ENCODE measurements at regions of chr15 and their contacts with region 1.

Region 1: GRCh38 chr15:25933456-25934158 is 70.5 kb upstream of the ATP10A start:
- DNase-seq: peak; percentile 24
- ATAC-seq: peak; percentile 91
- H3K4me3 Mint-ChIP-seq: peak overlapping the region; percentile 76
- H3K27ac Mint-ChIP-seq: no peak overlapping the region
- H3K4me1 Mint-ChIP-seq: peaks cover 15% of the 10 kb centered on the region
- H3K27me3 Mint-ChIP-seq: peaks cover 6% of the 10 kb centered on the region
- CTCF ChIP-seq: no peak

Region 2: GRCh38 chr15:24645627-24646026 is 1288.0 kb before region 1 on chr15:
- CTCF ChIA-PET with region 1: no interaction called
- POLR2A ChIA-PET with region 1: no interaction called
- intact Hi-C with region 1: no loop called
- DNase-seq: no peak
- ATAC-seq: no peak
- H3K4me3 Mint-ChIP-seq: no peak overlapping the region
- H3K27ac Mint-ChIP-seq: no peak overlapping the region
- H3K4me1 Mint-ChIP-seq: no peaks in the 10 kb centered on the region
- H3K27me3 Mint-ChIP-seq: no peaks in the 10 kb centered on the region
- CTCF ChIP-seq: no peak

Region 3: GRCh38 chr15:25508369-25509002 is 425.1 kb before region 1 on chr15:
- CTCF ChIA-PET with region 1: interaction called, 3 read pairs
- POLR2A ChIA-PET with region 1: no interaction called
- intact Hi-C with region 1: loop called (anchors 1 kb)
- DNase-seq: no peak
- ATAC-seq: no peak
- H3K4me3 Mint-ChIP-seq: no peak overlapping the region
- H3K27ac Mint-ChIP-seq: no peak overlapping the region
- H3K4me1 Mint-ChIP-seq: no peaks in the 10 kb centered on the region
- H3K27me3 Mint-ChIP-seq: no peaks in the 10 kb centered on the region
- CTCF ChIP-seq: no peak

Region 4: DNA sequence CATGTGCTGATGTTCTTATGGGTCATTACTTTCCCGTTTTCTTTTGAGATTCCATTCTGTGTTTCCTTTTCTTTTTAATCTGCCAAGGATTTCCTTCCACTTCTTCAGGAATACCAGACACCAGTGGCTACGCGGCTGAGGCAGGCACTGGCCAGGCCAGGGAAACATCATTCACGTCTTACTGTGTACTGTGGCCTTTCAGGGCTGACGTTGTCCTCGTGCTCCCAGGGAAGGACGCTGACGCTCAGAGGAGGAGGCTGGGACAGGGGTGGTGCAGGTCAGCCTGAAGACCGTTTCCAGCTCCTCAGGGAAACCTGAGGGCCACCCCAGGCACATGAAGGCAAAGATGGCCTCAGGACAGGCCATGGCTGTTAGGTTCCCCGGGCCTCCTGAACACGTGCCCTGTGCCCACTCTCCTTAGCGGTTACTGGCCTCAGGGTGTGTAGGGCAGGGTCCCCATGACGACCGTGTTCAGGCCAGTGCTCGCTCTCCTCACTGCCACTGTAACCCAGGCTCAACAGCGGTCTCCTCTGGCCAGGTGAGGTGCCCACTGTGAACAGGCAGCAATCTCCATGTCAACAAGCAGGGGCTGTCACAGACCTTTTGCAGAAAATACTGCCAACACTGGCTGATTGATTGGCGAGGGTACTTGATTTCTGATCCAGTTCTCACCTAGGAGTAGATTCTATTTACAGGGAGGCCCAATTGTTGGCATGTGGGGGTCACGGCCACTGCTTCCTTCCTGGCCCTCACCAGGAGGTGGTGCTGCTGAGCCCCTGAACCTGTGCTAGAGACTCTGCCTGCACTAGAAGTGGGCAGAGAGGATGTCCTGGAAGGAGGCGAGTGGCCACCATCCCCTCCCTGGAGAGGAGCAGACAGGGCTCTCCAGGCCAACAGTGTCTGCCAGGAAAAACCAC is 240.0 kb before region 1 on chr15:
- CTCF ChIA-PET with region 1: interaction called, 3 read pairs
- POLR2A ChIA-PET with region 1: no interaction called
- intact Hi-C with region 1: loop called (anchors 1 kb)
- DNase-seq: no peak
- ATAC-seq: no peak
- H3K4me3 Mint-ChIP-seq: no peak overlapping the region
- H3K27ac Mint-ChIP-seq: no peak overlapping the region
- H3K4me1 Mint-ChIP-seq: no peaks in the 10 kb centered on the region
- H3K27me3 Mint-ChIP-seq: no peaks in the 10 kb centered on the region
- CTCF ChIP-seq: no peak

Region 5: GRCh38 chr15:25710184-25710583 is 223.4 kb before region 1 on chr15:
- CTCF ChIA-PET with region 1: interaction called, 8 read pairs
- POLR2A ChIA-PET with region 1: no interaction called
- intact Hi-C with region 1: loop called (anchors 1 kb)
- DNase-seq: peak; percentile 34
- ATAC-seq: peak; percentile 58
- H3K4me3 Mint-ChIP-seq: no peak overlapping the region
- H3K27ac Mint-ChIP-seq: no peak overlapping the region
- H3K4me1 Mint-ChIP-seq: no peaks in the 10 kb centered on the region
- H3K27me3 Mint-ChIP-seq: peaks cover 2% of the 10 kb centered on the region
- CTCF ChIP-seq: no peak

Region 6: GRCh38 chr15:25739687-25740121 is 193.9 kb before region 1 on chr15:
- CTCF ChIA-PET with region 1: interaction called, 4 read pairs
- POLR2A ChIA-PET with region 1: interaction called, 7 read pairs
- intact Hi-C with region 1: loop called (anchors 1 kb)
- DNase-seq: no peak
- ATAC-seq: peak; percentile 78
- H3K4me3 Mint-ChIP-seq: no peak overlapping the region
- H3K27ac Mint-ChIP-seq: no peak overlapping the region
- H3K4me1 Mint-ChIP-seq: peaks cover 20% of the 10 kb centered on the region
- H3K27me3 Mint-ChIP-seq: peaks cover 37% of the 10 kb centered on the region
- CTCF ChIP-seq: no peak

Region 7: GRCh38 chr15:25790000-25790660 is 143.5 kb before region 1 on chr15:
- CTCF ChIA-PET with region 1: interaction called, 4 read pairs
- POLR2A ChIA-PET with region 1: no interaction called
- intact Hi-C with region 1: loop called (anchors 10 kb)
- DNase-seq: no peak
- ATAC-seq: no peak
- H3K4me3 Mint-ChIP-seq: no peak overlapping the region
- H3K27ac Mint-ChIP-seq: no peak overlapping the region
- H3K4me1 Mint-ChIP-seq: peaks cover 20% of the 10 kb centered on the region
- H3K27me3 Mint-ChIP-seq: peaks cover 14% of the 10 kb centered on the region
- CTCF ChIP-seq: no peak

Region 8: GRCh38 chr15:26132811-26133210 is 199.2 kb after region 1 on chr15:
- CTCF ChIA-PET with region 1: no interaction called
- POLR2A ChIA-PET with region 1: no interaction called
- intact Hi-C with region 1: no loop called
- DNase-seq: no peak
- ATAC-seq: no peak
- H3K4me3 Mint-ChIP-seq: no peak overlapping the region
- H3K27ac Mint-ChIP-seq: no peak overlapping the region
- H3K4me1 Mint-ChIP-seq: no peaks in the 10 kb centered on the region
- H3K27me3 Mint-ChIP-seq: peaks cover 2% of the 10 kb centered on the region
- CTCF ChIP-seq: no peak

Measured in activated B cell treated with CpG ODN at 0.5 μM for 24 hours (primary cell).